AG04450 (cell line): ENCODE measurements at regions of chr10 and their contacts with region 1.

Region 1: GRCh38 chr10:97572214-97572989 is at the start of gene ANKRD2:
- DNase-seq: peak; percentile 52
- H3K4me3 ChIP-seq: no peak within 1 kb of the TSS
- H3K27ac ChIP-seq: no peak within 1 kb of the TSS
- H3K27me3 ChIP-seq: no peaks in the 10 kb centered on the region
- CTCF ChIP-seq: peak; percentile 92
- polyA plus RNA-seq, gene ANKRD2: 0.05 and 0.06 TPM in 2 replicates

Region 2: DNA sequence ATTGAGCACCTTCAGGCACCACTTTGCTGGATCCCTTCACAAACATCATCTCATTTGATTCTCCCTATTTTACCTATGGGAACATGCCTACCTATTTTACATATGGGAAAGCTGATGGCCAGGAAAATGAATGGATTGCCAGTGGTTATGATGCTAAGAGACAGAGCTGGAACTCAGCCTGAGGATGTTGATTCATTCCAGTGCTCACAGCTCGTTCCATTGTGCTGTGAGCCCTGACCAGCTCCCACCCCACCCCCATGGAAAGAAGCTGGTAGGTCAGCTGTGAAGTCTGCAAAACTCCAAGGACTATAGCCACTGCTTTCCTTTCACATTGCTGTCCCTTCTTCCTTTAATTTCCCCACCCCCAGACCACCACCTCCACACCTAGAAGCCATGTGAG is 64.1 kb before region 1 on chr10:
- CTCF ChIA-PET with region 1: no interaction called
- POLR2A ChIA-PET with region 1: no interaction called
- DNase-seq: no peak
- H3K4me3 ChIP-seq: no peak overlapping the region
- H3K27ac ChIP-seq: no peak overlapping the region
- H3K27me3 ChIP-seq: no peaks in the 10 kb centered on the region
- CTCF ChIP-seq: no peak

Region 3: GRCh38 chr10:97584060-97584797 is 11.8 kb after region 1 on chr10 and contains the start of gene HOGA1:
- CTCF ChIA-PET with region 1: interaction called, 12 read pairs
- POLR2A ChIA-PET with region 1: no interaction called
- DNase-seq: no peak
- H3K4me3 ChIP-seq: no peak within 1 kb of the TSS
- H3K27ac ChIP-seq: no peak within 1 kb of the TSS
- H3K27me3 ChIP-seq: no peaks in the 10 kb centered on the region
- CTCF ChIP-seq: no peak
- polyA plus RNA-seq, gene HOGA1: 0.41 and 0.53 TPM in 2 replicates

Region 4: GRCh38 chr10:97596101-97597062 is 24.0 kb after region 1 on chr10:
- CTCF ChIA-PET with region 1: interaction called, 10 read pairs
- POLR2A ChIA-PET with region 1: no interaction called
- DNase-seq: peak; percentile 15
- H3K4me3 ChIP-seq: no peak overlapping the region
- H3K27ac ChIP-seq: peak overlapping the region; percentile 39
- H3K27me3 ChIP-seq: no peaks in the 10 kb centered on the region
- CTCF ChIP-seq: no peak

Region 5: DNA sequence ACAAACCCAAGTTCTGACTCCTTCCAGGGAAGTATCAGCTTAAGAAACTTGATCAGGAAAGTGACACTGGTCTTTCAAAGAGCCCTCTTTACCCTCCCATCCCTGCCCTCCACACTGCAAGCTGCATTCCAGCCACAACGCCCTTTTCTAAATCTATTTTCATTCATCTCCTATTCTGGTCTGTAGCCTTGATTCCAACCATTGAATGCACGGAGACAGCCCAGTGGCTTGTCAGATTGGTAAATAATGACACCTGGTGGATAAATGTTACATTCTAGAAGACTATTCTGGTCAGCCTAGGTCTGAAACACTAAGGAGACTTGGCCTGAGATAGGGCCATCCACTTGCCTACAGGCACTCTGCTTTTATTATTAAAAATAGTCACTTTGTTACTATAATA is 40.0 kb after region 1 on chr10:
- CTCF ChIA-PET with region 1: interaction called, 22 read pairs
- POLR2A ChIA-PET with region 1: no interaction called
- DNase-seq: peak; percentile 15
- H3K4me3 ChIP-seq: no peak overlapping the region
- H3K27ac ChIP-seq: no peak overlapping the region
- H3K27me3 ChIP-seq: no peaks in the 10 kb centered on the region
- CTCF ChIP-seq: peak; percentile 32; the same call in 1 of the 2 replicates

Region 6: DNA sequence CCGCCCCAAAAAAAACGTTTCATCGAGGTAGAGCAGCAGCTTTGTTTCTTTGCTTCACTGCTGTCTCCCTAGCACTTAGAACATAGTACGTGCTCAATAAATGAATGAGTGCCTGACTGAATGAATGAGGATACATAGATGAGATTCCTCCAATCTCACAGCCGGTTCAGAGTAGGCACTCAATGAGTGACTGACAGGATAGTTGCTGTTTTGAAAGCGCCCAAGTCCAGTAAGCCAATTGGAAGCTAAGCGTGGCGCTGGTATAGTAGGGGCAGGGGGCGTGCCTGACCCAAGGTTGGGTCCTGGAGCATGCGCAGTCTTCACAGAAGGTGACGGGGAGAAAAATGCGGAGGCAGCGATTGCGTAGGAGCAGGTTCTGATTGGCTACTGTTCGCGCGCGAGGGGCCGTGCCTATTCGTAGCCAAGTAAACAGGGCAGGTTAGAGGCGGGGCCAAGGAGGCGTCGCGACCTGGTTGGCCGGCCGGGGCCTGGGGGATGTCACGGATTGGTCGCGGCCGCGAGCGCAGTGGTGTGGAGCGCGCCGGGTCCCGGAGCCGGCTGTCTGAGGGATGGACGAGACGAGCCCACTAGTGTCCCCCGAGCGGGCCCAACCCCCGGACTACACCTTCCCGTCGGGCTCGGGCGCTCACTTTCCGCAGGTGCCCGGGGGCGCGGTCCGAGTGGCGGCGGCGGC is 67.9 kb after region 1 on chr10 and contains the start of gene PI4K2A:
- CTCF ChIA-PET with region 1: interaction called, 10 read pairs
- POLR2A ChIA-PET with region 1: no interaction called
- DNase-seq: peak; percentile 98
- H3K4me3 ChIP-seq: peak within 1 kb of the TSS; percentile 83
- H3K27ac ChIP-seq: peak within 1 kb of the TSS; percentile 73
- H3K27me3 ChIP-seq: no peaks in the 10 kb centered on the region
- CTCF ChIP-seq: no peak
- polyA plus RNA-seq, gene PI4K2A: 35.6 and 36.1 TPM in 2 replicates